ENCODE measurements at regions of chr10 and their contacts with region 1.

Region 1: GRCh38 chr10:97318772-97319651 is at the start of gene FRAT1:
- DNase-seq: peak; percentile 91
- H3K27ac ChIP-seq: peak within 1 kb of the TSS; percentile 90
- CTCF ChIP-seq: no peak

Region 2: GRCh38 chr10:97333560-97334369 is 14.8 kb after region 1 on chr10:
- CTCF ChIA-PET with region 1: interaction called, 4 read pairs
- POLR2A ChIA-PET with region 1: interaction called, 10 read pairs
- DNase-seq: peak; percentile 57
- H3K27ac ChIP-seq: peak overlapping the region; percentile 93
- CTCF ChIP-seq: no peak

Measured in RWPE1 (cell line).